ENCODE measurements at regions of chr20 and their contacts with region 1.

Region 1: GRCh38 chr20:38893565-38894090 is 32.6 kb upstream of the FAM83D start:
- DNase-seq: peak; percentile 74 to 84 (median 79)
- H3K4me3 ChIP-seq: peak overlapping the region in 1 of 2 donors; percentile 25
- H3K4me3 Mint-ChIP-seq: peak overlapping the region; percentile 22 to 75 (median 67)
- H3K27ac ChIP-seq: peak overlapping the region; percentile 64
- H3K27ac Mint-ChIP-seq: peak overlapping the region; percentile 90 to 96 (median 93)
- H3K4me1 ChIP-seq: peaks cover 36% of the 10 kb centered on the region
- H3K4me1 Mint-ChIP-seq: peaks cover 24 to 41% (median 28%) of the 10 kb centered on the region in 4 donors
- H3K27me3 ChIP-seq: no peaks in the 10 kb centered on the region
- H3K27me3 Mint-ChIP-seq: no peaks in the 10 kb centered on the region

Region 2: DNA sequence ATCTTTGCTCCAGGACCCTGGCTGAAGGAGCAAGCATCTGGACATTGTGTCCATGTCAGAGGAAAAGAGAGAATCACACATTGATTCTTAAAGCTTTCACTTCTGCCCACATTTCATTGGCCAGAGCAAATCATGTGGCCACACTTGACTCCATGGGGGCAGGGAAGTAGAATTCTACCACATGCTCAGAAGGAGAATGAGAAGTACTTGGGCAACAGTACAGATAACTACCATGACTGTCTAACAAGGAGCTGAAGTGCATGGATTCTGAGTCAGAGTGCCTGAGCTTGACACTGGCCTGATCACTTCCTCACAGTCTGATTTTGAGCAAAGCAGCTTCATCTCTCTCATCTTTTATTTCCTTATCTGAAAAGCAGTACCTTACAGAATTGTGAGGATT is 1670.6 kb before region 1 on chr20:
- CTCF ChIA-PET with region 1: no interaction called
- POLR2A ChIA-PET with region 1: no interaction called
- intact Hi-C with region 1: no loop called
- DNase-seq: no peak
- H3K4me3 ChIP-seq: no peak overlapping the region
- H3K4me3 Mint-ChIP-seq: no peak overlapping the region
- H3K27ac ChIP-seq: no peak overlapping the region
- H3K27ac Mint-ChIP-seq: peak overlapping the region in 1 of 7 donors; percentile 12
- H3K4me1 ChIP-seq: no peaks in the 10 kb centered on the region
- H3K4me1 Mint-ChIP-seq: peaks cover 0 to 1% (median 0%) of the 10 kb centered on the region in 4 donors
- H3K27me3 ChIP-seq: no peaks in the 10 kb centered on the region
- H3K27me3 Mint-ChIP-seq: no peaks in the 10 kb centered on the region

Region 3: DNA sequence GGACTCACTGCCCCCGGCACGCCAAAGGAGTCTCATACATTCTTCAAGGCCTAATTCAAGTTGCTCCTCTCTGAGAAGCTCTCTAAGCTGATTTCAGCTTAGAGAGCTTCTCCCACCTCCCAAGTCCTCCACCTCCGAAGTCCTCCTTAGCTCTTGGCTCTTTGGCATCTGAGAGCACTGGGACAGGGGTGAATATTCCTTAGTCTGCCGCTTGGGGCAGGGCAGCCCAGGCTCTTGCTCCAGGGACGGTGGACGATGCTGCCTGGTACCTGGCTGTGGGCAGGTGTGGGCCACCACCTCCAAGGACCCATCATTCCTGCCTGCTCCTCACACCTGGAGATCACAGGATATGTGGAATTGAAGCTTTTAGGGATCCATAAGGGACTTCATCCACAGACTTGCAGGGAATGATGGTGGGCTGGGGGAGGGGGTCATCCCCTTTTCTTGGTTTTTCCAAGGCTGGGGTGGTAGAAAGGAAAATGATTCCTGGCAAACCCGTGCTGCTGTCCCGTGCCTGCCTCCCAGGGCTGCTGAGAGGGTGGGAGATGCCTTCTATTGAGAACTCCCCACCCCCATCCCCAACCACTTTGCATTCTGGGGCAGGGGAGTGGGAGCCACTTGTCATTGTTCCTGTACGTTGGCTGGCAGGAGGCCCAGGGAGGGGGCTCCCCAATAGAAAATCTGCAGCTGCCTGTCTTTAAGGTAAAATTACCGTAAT is 234.6 kb before region 1 on chr20:
- CTCF ChIA-PET with region 1: interaction called, 12 read pairs
- POLR2A ChIA-PET with region 1: no interaction called
- intact Hi-C with region 1: no loop called
- DNase-seq: peak in 4 of 5 donors; percentile 22 to 36 (median 26)
- H3K4me3 ChIP-seq: no peak overlapping the region
- H3K4me3 Mint-ChIP-seq: no peak overlapping the region
- H3K27ac ChIP-seq: no peak overlapping the region
- H3K27ac Mint-ChIP-seq: peak overlapping the region in 1 of 7 donors; percentile 53
- H3K4me1 ChIP-seq: no peaks in the 10 kb centered on the region
- H3K4me1 Mint-ChIP-seq: peaks cover 0 to 3% (median under 1%) of the 10 kb centered on the region in 4 donors
- H3K27me3 ChIP-seq: no peaks in the 10 kb centered on the region
- H3K27me3 Mint-ChIP-seq: peaks cover 21 to 39% of the 10 kb centered on the region in 2 donors

Region 4: GRCh38 chr20:38759106-38759505 is 134.5 kb before region 1 on chr20:
- CTCF ChIA-PET with region 1: interaction called, 56 read pairs
- POLR2A ChIA-PET with region 1: no interaction called
- intact Hi-C with region 1: no loop called
- DNase-seq: no peak
- H3K4me3 ChIP-seq: no peak overlapping the region
- H3K4me3 Mint-ChIP-seq: no peak overlapping the region
- H3K27ac ChIP-seq: no peak overlapping the region
- H3K27ac Mint-ChIP-seq: no peak overlapping the region
- H3K4me1 ChIP-seq: no peaks in the 10 kb centered on the region
- H3K4me1 Mint-ChIP-seq: peaks cover 0 to 9% (median 2%) of the 10 kb centered on the region in 4 donors
- H3K27me3 ChIP-seq: no peaks in the 10 kb centered on the region
- H3K27me3 Mint-ChIP-seq: no peaks in the 10 kb centered on the region

Region 5: DNA sequence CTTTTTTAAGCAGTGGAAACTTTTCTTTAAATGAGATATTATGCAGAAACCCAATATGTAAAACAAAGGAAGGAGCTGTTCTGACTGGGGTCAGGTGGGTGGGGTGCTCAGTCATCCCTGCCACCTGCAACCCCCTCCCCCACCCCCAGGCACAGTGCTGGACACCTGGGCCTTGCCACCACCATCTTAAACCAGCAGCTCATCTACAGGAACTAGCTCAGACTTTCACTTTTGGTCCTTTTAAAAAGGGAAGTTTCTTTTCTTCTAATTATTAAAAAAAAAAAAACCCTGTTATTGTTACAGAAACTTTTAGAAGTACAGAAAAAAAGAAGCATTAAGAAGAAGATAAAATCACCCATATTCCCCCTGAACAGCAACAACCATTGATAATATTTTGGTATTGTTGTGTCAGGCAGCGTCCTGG is 51.1 kb before region 1 on chr20:
- CTCF ChIA-PET with region 1: interaction called, 18 read pairs
- POLR2A ChIA-PET with region 1: interaction called, 30 read pairs
- intact Hi-C with region 1: loop called (anchors 1 kb)
- DNase-seq: peak; percentile 50 to 67 (median 56)
- H3K4me3 ChIP-seq: no peak overlapping the region
- H3K4me3 Mint-ChIP-seq: peak overlapping the region; percentile 60 to 87 (median 74)
- H3K27ac ChIP-seq: peak overlapping the region; percentile 83
- H3K27ac Mint-ChIP-seq: peak overlapping the region; percentile 96 to 100 (median 99)
- H3K4me1 ChIP-seq: peaks cover 96% of the 10 kb centered on the region
- H3K4me1 Mint-ChIP-seq: peaks cover 67 to 88% (median 77%) of the 10 kb centered on the region in 4 donors
- H3K27me3 ChIP-seq: no peaks in the 10 kb centered on the region
- H3K27me3 Mint-ChIP-seq: no peaks in the 10 kb centered on the region

Region 6: GRCh38 chr20:38875175-38875993 is 18.2 kb before region 1 on chr20:
- CTCF ChIA-PET with region 1: interaction called, 159 read pairs
- POLR2A ChIA-PET with region 1: interaction called, 59 read pairs
- intact Hi-C with region 1: loop called (anchors 2 kb)
- DNase-seq: peak; percentile 78 to 85 (median 79)
- H3K4me3 ChIP-seq: peak overlapping the region; percentile 33 to 48
- H3K4me3 Mint-ChIP-seq: peak overlapping the region; percentile 86 to 95 (median 88)
- H3K27ac ChIP-seq: peak overlapping the region; percentile 75
- H3K27ac Mint-ChIP-seq: peak overlapping the region; percentile 97 to 100 (median 99)
- H3K4me1 ChIP-seq: peaks cover 87% of the 10 kb centered on the region
- H3K4me1 Mint-ChIP-seq: peaks cover 69 to 99% (median 84%) of the 10 kb centered on the region in 4 donors
- H3K27me3 ChIP-seq: no peaks in the 10 kb centered on the region
- H3K27me3 Mint-ChIP-seq: no peaks in the 10 kb centered on the region

Measured in CD4-positive, alpha-beta memory T cell (primary cell).